Calu3 (cell line): ENCODE measurements at regions of chr5 and their contacts with region 1.

Region 1: GRCh38 chr5:80083101-80083890 is 48.1 kb downstream of the THBS4 start:
- DNase-seq: peak; percentile 31
- H3K4me3 Mint-ChIP-seq: peak overlapping the region; percentile 56
- H3K27ac Mint-ChIP-seq: peak overlapping the region; percentile 8
- H3K4me1 Mint-ChIP-seq: peaks cover 29% of the 10 kb centered on the region
- H3K27me3 Mint-ChIP-seq: peaks cover 11% of the 10 kb centered on the region
- CTCF ChIP-seq: peak; percentile 21

Region 2: DNA sequence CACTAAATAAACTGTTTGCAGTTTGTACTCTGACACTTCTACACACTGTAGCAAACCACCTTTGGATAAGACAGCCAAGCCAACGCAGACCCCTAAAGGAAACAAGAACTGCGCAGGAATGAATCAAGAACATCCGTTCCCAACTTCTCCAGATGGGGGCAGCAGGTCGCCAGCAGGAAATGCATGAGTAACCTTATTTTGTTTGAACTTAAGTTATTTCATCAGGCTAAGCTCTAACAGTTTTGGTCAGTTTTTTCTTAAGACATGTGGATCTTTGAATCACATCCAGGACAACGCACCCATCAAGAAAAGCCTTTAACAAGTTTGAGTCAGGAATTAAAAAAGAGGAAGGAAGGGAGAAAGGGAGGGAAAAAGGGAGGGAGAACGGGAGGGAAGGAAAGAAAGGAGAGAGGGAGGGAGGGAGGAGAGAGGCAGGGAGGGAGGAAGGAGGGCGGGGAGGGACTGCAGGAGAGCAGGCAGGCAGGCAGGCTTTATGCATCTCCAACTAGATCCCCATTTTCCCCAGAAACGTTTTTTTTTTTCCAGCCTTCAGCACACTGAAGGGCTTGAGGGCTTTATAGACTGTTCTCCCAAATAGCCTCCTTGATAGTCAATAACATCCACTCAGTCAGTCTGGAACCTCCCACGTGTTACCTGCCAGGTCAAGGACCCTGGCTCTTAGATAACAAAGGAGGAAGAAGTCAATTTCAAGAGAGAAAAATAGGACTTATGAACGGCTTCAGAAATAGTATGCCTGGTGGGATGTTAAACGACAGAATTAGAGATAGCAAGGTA is 949.4 kb before region 1 on chr5:
- CTCF ChIA-PET with region 1: interaction called, 6 read pairs
- intact Hi-C with region 1: loop called (anchors 5 kb)
- DNase-seq: peak; percentile 82
- H3K4me3 Mint-ChIP-seq: peak overlapping the region; percentile 64
- H3K27ac Mint-ChIP-seq: peak overlapping the region; percentile 93
- H3K4me1 Mint-ChIP-seq: peaks cover 18% of the 10 kb centered on the region
- H3K27me3 Mint-ChIP-seq: peaks cover 1% of the 10 kb centered on the region
- CTCF ChIP-seq: peak; percentile 58

Region 3: DNA sequence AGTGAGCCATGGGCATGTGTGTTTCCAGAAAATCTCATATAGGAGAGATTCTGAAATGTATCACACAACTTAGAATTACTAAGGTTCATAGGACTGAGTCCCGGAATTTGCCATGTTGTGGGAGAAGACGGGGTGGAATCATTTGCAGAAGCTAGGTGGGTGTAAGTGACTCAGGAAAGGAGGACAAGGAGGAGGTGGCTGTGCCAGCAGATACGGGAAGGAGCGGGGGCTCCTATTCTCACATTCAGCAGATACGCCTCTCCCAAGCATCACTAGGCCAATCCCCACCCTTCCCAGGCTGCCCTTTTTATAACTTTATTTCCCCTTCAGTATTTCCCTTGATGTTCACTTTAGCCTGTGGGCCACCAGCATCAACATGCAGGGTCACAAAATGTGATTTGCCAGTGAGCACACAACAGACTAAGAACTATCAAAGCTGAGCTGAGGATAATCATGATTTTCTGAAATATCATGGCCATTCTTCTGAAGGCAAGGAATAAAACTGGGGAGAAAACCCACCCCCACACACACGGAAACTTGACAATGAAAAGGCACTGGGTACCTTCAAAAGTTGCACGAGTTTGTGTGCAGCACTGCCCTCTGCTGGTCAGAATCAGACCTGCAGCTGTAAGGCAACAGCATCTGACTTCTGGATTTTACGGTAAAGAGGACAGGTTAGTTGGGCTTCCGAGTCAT is 225.4 kb before region 1 on chr5:
- CTCF ChIA-PET with region 1: interaction called, 7 read pairs
- intact Hi-C with region 1: loop called (anchors 1 kb)
- DNase-seq: peak; percentile 83
- H3K4me3 Mint-ChIP-seq: no peak overlapping the region
- H3K27ac Mint-ChIP-seq: no peak overlapping the region
- H3K4me1 Mint-ChIP-seq: no peaks in the 10 kb centered on the region
- H3K27me3 Mint-ChIP-seq: no peaks in the 10 kb centered on the region
- CTCF ChIP-seq: peak; percentile 97

Region 4: GRCh38 chr5:79924936-79925893 is 158.1 kb before region 1 on chr5:
- CTCF ChIA-PET with region 1: no interaction called
- intact Hi-C with region 1: loop called (anchors 1 kb)
- DNase-seq: peak; percentile 9
- H3K4me3 Mint-ChIP-seq: no peak overlapping the region
- H3K27ac Mint-ChIP-seq: no peak overlapping the region
- H3K4me1 Mint-ChIP-seq: no peaks in the 10 kb centered on the region
- H3K27me3 Mint-ChIP-seq: peaks cover 77% of the 10 kb centered on the region
- CTCF ChIP-seq: no peak

Region 5: GRCh38 chr5:80055491-80056170 is 27.7 kb before region 1 on chr5:
- CTCF ChIA-PET with region 1: interaction called, 10 read pairs
- intact Hi-C with region 1: no loop called
- DNase-seq: peak; percentile 75
- H3K4me3 Mint-ChIP-seq: peak overlapping the region; percentile 42
- H3K27ac Mint-ChIP-seq: no peak overlapping the region
- H3K4me1 Mint-ChIP-seq: peaks cover 17% of the 10 kb centered on the region
- H3K27me3 Mint-ChIP-seq: peaks cover 11% of the 10 kb centered on the region
- CTCF ChIP-seq: no peak

Region 6: GRCh38 chr5:80308526-80308925 is 225.2 kb after region 1 on chr5:
- CTCF ChIA-PET with region 1: interaction called, 14 read pairs
- intact Hi-C with region 1: no loop called
- DNase-seq: no peak
- H3K4me3 Mint-ChIP-seq: no peak overlapping the region
- H3K27ac Mint-ChIP-seq: no peak overlapping the region
- H3K4me1 Mint-ChIP-seq: no peaks in the 10 kb centered on the region
- H3K27me3 Mint-ChIP-seq: no peaks in the 10 kb centered on the region
- CTCF ChIP-seq: no peak